CD4-positive, alpha-beta memory T cell (primary cell): ENCODE measurements at regions of chr9 and their contacts with region 1.

Region 1: GRCh38 chr9:994005-994404 is 17.6 kb downstream of the DMRT3 start:
- DNase-seq: no peak
- H3K4me3 ChIP-seq: no peak overlapping the region
- H3K4me3 Mint-ChIP-seq: no peak overlapping the region
- H3K27ac ChIP-seq: no peak overlapping the region
- H3K27ac Mint-ChIP-seq: no peak overlapping the region
- H3K4me1 ChIP-seq: peaks cover 2% of the 10 kb centered on the region
- H3K4me1 Mint-ChIP-seq: peaks cover 0 to 8% (median 5%) of the 10 kb centered on the region in 4 donors
- H3K27me3 ChIP-seq: no peaks in the 10 kb centered on the region
- H3K27me3 Mint-ChIP-seq: peaks cover 5 to 6% of the 10 kb centered on the region in 2 donors

Region 2: DNA sequence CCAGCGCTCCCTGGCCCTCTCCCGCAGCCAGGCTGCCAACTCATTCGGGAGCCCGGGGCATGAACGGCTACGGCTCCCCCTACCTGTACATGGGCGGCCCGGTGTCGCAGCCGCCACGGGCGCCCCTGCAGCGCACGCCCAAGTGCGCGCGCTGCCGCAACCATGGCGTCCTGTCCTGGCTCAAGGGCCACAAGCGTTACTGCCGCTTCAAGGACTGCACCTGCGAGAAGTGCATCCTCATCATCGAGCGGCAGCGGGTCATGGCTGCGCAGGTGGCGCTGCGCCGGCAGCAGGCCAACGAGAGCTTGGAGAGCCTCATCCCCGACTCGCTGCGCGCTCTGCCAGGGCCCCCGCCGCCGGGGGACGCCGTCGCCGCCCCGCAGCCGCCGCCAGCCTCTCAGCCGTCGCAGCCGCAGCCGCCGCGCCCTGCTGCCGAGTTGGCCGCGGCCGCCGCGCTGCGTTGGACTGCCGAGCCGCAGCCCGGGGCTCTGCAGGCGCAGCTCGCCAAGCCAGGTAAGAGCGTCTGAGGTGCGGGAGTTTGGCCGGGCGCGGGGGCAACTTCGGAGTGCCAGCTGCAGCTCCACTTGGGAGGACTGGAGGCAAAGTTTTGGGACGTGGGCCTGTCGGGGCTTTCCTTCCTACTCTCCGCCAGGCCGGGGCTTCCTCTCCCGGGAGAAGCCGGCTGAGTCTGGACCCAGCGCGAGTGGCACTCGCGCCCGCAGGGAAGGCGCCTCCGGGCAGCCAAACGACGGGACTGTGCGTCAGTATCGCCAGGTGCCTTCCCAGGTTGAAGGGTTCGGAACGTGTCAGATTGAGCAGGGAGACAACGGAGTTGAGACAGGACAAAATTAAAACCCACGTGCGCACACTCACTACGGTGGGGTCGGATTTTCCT is 16.8 kb before region 1 on chr9:
- CTCF ChIA-PET with region 1: interaction called, 10 read pairs
- POLR2A ChIA-PET with region 1: no interaction called
- intact Hi-C with region 1: no loop called
- DNase-seq: no peak
- H3K4me3 ChIP-seq: no peak overlapping the region
- H3K4me3 Mint-ChIP-seq: no peak overlapping the region
- H3K27ac ChIP-seq: no peak overlapping the region
- H3K27ac Mint-ChIP-seq: no peak overlapping the region
- H3K4me1 ChIP-seq: peaks cover 9% of the 10 kb centered on the region
- H3K4me1 Mint-ChIP-seq: peaks cover 6 to 27% (median 12%) of the 10 kb centered on the region in 4 donors
- H3K27me3 ChIP-seq: peaks cover 71% of the 10 kb centered on the region
- H3K27me3 Mint-ChIP-seq: peaks cover 62 to 68% of the 10 kb centered on the region in 2 donors